ENCODE measurements at regions of chr17 and their contacts with region 1.

Region 1: GRCh38 chr17:80426681-80427326 is 11.8 kb downstream of the ENDOV start:
- DNase-seq: peak; percentile 62 to 81
- ATAC-seq: peak; percentile 60 to 88 (median 79)
- H3K4me3 ChIP-seq: no peak overlapping the region
- H3K27ac ChIP-seq: no peak overlapping the region
- H3K4me1 ChIP-seq: peaks cover 0 to 25% (median 11%) of the 10 kb centered on the region in 9 donors
- H3K27me3 ChIP-seq: no peaks in the 10 kb centered on the region
- CTCF ChIP-seq: peak; percentile 87 to 99 (median 96)

Region 2: GRCh38 chr17:80569924-80570323 is 143.1 kb after region 1 on chr17:
- intact Hi-C with region 1: loop called in 9 of 10 experiments (anchors 1 to 5 kb)
- DNase-seq: no peak
- ATAC-seq: no peak
- H3K4me3 ChIP-seq: no peak overlapping the region
- H3K27ac ChIP-seq: no peak overlapping the region
- H3K4me1 ChIP-seq: peaks cover 0 to 3% (median 0%) of the 10 kb centered on the region in 9 donors
- H3K27me3 ChIP-seq: no peaks in the 10 kb centered on the region
- CTCF ChIP-seq: no peak

Region 3: DNA sequence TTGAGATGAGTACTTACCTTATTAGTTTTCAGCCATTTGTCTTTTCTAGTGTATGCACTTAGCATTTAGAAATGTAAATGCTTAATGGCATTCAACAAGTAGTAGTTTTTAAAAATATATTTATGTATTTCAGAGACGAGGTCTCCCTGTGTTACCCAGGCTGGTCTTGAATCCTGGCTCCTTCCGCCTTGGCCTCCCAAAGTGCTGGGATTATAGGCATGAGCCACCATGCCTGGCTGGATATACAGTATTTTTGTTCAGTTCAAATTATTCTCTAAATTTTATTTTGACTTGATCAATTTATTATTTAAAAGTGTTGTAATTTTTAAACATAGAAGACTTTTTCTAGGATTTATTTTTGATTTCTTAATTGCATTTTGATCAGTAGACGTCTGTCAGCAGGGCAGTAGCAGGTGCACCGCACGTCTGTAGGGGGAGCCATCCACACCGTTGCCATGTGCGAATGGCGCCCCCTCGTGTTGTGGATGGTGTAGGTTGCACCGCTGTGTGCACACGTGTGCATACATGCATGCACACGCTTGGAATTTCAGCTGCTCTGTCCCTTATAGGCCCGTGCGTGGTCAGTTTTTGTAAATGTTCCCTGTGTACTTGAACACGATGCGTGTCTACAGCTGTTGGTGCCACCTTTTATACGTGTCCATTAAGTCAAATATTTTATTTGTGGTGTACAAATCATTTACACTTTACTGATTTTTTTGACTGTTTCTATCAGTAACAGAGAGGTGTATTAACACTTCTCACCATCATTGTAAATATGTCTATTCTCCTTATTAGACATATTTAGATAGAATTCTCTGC is 148.5 kb after region 1 on chr17:
- intact Hi-C with region 1: loop called in 9 of 10 experiments (anchors 1 to 5 kb)
- DNase-seq: peak; percentile 69 to 79
- ATAC-seq: peak in 7 of 8 donors; percentile 67 to 88 (median 80)
- H3K4me3 ChIP-seq: no peak overlapping the region
- H3K27ac ChIP-seq: no peak overlapping the region
- H3K4me1 ChIP-seq: peaks cover 0 to 9% (median 0%) of the 10 kb centered on the region in 9 donors
- H3K27me3 ChIP-seq: no peaks in the 10 kb centered on the region
- CTCF ChIP-seq: peak; percentile 55 to 100 (median 88)

Region 4: DNA sequence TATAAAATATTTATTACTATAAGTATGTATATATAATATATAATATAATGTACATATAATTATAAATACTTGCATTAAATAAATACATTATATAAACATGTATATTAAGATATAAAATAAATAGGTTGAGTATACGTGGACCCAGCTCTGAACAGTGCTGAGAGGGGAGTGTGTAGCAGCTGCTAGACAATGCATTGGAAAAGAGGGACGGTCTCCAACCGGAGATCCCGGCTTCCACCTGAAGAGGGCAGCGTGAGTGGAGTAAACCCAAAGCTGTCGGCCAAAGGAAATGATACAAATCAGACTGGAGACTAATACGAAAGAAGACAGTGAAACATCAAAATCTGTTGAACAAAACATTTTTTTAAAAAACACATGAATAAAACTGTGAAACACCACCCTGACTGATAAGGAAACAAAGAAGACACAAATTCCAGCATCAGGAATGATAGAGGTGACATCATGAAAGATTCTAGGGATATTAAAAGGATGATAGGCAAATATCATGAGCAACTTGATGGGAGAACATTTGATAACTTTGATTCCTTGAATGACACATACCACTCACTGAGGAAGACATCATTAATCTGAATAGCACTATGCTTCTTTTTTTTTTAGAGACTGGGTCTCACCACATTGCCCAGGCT is 439.5 kb after region 1 on chr17:
- intact Hi-C with region 1: loop called in 2 of 10 experiments (anchors 5 to 10 kb)
- DNase-seq: peak; percentile 63 to 75
- ATAC-seq: peak in 6 of 8 donors; percentile 54 to 80 (median 70)
- H3K4me3 ChIP-seq: no peak overlapping the region
- H3K27ac ChIP-seq: no peak overlapping the region
- H3K4me1 ChIP-seq: peaks cover 0 to 23% (median 3%) of the 10 kb centered on the region in 9 donors
- H3K27me3 ChIP-seq: no peaks in the 10 kb centered on the region
- CTCF ChIP-seq: peak; percentile 55 to 86 (median 77)

Region 5: GRCh38 chr17:80970044-80970761 is 543.4 kb after region 1 on chr17:
- intact Hi-C with region 1: loop called in 1 of 10 experiments (anchors 2 kb)
- DNase-seq: peak; percentile 51 to 57
- ATAC-seq: peak; percentile 66 to 84 (median 76)
- H3K4me3 ChIP-seq: no peak overlapping the region
- H3K27ac ChIP-seq: peak overlapping the region in 1 of 10 donors; percentile 19
- H3K4me1 ChIP-seq: peaks cover 4 to 27% (median 20%) of the 10 kb centered on the region in 9 donors
- H3K27me3 ChIP-seq: peaks cover 0 to 42% (median 15%) of the 10 kb centered on the region in 7 donors
- CTCF ChIP-seq: peak in 8 of 9 donors; percentile 43 to 72 (median 62)

Region 6: DNA sequence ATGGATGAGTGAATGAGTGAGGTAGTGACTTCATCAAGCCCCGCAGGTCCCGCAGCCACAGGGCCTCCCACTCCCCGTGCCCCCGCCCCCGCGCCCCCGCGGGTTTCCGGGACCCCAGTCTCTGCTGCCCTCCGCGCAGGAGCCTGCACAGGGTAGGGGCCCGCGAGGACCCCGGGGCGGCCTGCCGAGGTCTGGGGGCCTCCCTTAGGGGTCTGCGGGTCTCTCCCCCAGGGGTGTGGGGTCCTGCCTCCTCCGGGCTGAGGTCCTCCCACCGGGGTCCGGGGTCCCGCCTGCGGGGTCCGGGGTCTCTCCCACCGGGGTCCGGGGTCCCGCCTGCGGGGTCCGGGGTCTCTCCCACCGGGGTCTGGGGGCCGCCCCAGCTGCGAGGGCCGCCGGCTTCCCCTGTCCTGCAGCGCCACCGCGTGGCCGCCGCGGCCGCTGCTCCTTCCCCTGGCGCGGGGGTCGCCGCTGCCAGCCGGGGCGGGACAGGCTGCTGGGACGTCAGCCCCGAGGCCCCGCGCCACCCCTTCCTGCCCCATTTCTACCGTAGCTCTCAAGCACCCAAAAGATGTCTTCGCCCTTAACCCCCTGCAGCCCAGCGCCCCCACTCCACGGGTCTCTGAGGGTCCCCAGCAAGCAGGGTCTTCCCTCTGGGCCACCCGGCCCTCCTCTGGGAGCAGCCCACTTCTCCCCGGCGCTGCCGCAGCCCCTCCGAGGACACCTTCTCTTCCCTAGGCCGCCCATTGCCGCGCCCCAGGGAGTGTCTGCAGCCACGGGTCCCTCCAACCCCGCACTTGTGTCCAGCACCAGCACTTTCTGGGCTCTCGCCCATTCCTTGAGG is 554.5 kb after region 1 on chr17:
- intact Hi-C with region 1: loop called (anchors 1 to 5 kb)
- DNase-seq: peak in 1 of 2 donors; percentile 24
- ATAC-seq: peak in 4 of 8 donors; percentile 32 to 49 (median 39)
- H3K4me3 ChIP-seq: peak overlapping the region in 3 of 10 donors; percentile 18 to 35 (median 22)
- H3K27ac ChIP-seq: no peak overlapping the region
- H3K4me1 ChIP-seq: peaks cover 3 to 21% (median 15%) of the 10 kb centered on the region in 9 donors
- H3K27me3 ChIP-seq: peaks cover 0 to 27% (median 18%) of the 10 kb centered on the region in 7 donors
- CTCF ChIP-seq: peak; percentile 74 to 92 (median 83)

Region 7: DNA sequence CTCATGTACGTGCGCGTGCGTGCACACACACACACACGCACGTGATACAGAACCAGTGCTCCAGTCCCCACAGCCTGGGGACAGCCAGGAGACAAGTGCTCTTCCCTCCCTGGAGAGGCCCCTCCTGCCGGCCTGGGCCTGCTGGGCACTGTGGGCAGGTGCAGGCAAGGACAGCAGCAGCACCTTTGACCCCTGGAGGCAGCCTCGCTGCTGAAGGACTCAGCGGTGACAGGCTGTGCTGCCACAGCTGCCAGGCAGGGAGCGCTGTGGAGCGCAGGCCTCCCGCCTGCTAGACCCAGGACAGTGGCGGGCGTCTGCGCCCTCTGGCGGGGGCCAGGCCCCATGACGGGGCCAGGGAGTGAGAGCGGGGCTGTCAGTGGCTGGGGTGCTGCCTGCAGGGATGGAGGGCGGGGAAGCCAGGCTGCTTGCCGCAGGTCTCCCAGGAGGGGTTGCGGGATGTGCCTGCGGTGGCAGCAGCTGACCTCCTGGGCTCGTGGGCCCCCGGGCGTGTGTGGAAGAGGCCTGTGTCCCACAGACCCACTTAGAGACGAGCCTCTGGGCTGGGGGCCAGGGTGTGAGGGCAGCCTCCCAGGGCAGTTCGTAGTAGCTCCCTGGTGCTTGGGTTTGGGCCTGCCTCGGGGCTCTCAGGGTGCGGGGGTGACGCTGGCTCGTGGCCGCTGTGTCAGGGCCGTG is 675.0 kb after region 1 on chr17:
- intact Hi-C with region 1: loop called in 1 of 10 experiments (anchors 1 kb)
- DNase-seq: peak; percentile 73 to 84
- ATAC-seq: peak; percentile 72 to 90 (median 85)
- H3K4me3 ChIP-seq: no peak overlapping the region
- H3K27ac ChIP-seq: no peak overlapping the region
- H3K4me1 ChIP-seq: peaks cover 0 to 25% (median 18%) of the 10 kb centered on the region in 9 donors
- H3K27me3 ChIP-seq: no peaks in the 10 kb centered on the region
- CTCF ChIP-seq: peak; percentile 99 to 100 (median 100)

Measured in heart right ventricle (tissue), 16 donors.